PC-9 (cell line): ENCODE measurements at regions of chr6 and their contacts with region 1.

Region 1: GRCh38 chr6:154738551-154738961 is 5.3 kb downstream of the SCAF8 start:
- DNase-seq: no peak
- H3K4me3 ChIP-seq: no peak overlapping the region
- H3K27ac ChIP-seq: no peak overlapping the region
- H3K4me1 ChIP-seq: peaks cover 8% of the 10 kb centered on the region
- H3K27me3 ChIP-seq: no peaks in the 10 kb centered on the region
- CTCF ChIP-seq: no peak

Region 2: GRCh38 chr6:154754152-154754551 is 15.6 kb after region 1 on chr6:
- CTCF ChIA-PET with region 1: interaction called, 12 read pairs
- POLR2A ChIA-PET with region 1: no interaction called
- intact Hi-C with region 1: no loop called
- DNase-seq: no peak
- H3K4me3 ChIP-seq: no peak overlapping the region
- H3K27ac ChIP-seq: 0 out of 2 replicates have a peak overlapping the region, but pooled peaks have one; percentile 6
- H3K4me1 ChIP-seq: no peaks in the 10 kb centered on the region
- H3K27me3 ChIP-seq: no peaks in the 10 kb centered on the region
- CTCF ChIP-seq: no peak

Region 3: GRCh38 chr6:154797857-154798256 is 59.3 kb after region 1 on chr6:
- CTCF ChIA-PET with region 1: no interaction called
- POLR2A ChIA-PET with region 1: interaction called, 3 read pairs
- intact Hi-C with region 1: loop called (anchors 2 kb)
- DNase-seq: no peak
- H3K4me3 ChIP-seq: no peak overlapping the region
- H3K27ac ChIP-seq: no peak overlapping the region
- H3K4me1 ChIP-seq: peaks cover 7% of the 10 kb centered on the region
- H3K27me3 ChIP-seq: no peaks in the 10 kb centered on the region
- CTCF ChIP-seq: no peak